Breast epithelium (tissue), 4 donors: ENCODE measurements at regions of chr16 and their contacts with region 1.

Region 1: GRCh38 chr16:14225457-14225856 is 154.3 kb downstream of the MRTFB start:
- DNase-seq: no peak
- H3K4me3 ChIP-seq: no peak overlapping the region
- H3K27ac ChIP-seq: no peak overlapping the region
- H3K4me1 ChIP-seq: no peaks in the 10 kb centered on the region
- H3K27me3 ChIP-seq: no peaks in the 10 kb centered on the region
- CTCF ChIP-seq: no peak
- POLR2A ChIP-seq: no peak

Region 2: DNA sequence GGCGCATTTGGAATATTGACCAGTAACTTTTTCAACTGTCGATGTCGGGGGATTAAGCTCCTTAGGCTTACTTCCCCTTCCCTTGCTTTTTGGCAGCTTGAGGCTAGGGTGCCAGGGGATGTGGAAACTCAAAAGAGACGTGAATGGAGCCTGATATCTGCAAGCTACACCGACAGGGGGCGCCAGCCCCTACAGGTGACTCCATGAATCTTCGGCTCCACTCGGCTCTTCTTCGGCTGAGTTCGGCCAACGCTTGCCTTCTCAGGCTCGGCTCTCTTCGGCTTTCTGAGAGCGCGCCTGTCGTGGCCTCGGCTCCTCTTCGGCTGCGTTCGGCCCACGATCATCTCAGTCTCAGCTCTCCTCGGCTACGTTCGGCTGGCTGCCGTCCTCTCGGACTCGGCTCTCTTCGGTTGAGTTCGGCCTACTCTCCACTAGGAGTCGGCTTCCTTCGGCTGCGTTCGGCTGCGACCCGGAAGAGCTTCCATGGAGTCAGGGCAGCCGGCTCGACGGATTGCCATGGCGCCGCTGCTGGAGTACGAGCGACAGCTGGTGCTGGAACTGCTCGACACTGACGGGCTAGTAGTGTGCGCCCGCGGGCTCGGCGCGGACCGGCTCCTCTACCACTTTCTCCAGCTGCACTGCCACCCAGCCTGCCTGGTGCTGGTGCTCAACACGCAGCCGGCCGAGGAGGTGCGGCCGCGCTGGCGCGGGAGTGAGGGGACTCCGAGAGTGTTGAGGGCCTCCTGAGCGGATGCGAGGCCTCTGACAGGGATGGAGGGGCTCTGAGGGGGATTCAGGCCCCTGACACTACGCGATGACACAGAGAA is 305.6 kb before region 1 on chr16 and contains the start of gene ERCC4:
- intact Hi-C with region 1: loop called (anchors 5 kb)
- DNase-seq: peak; percentile 98 to 99
- H3K4me3 ChIP-seq: peak within 1 kb of the TSS; percentile 72 to 96 (median 79)
- H3K27ac ChIP-seq: peak within 1 kb of the TSS; percentile 62 to 63
- H3K4me1 ChIP-seq: no peaks in the 10 kb centered on the region
- H3K27me3 ChIP-seq: no peaks in the 10 kb centered on the region
- CTCF ChIP-seq: peak; percentile 85 to 97 (median 95)
- POLR2A ChIP-seq: peak; percentile 42
- total RNA-seq, gene ERCC4: 4.8 to 8.3 (median 7.9) TPM